Activated CD4-positive, alpha-beta T cell treated with anti-CD3 and anti-CD28 coated beads for 36 hours (primary cell): ENCODE measurements at regions of chrX and their contacts with region 1.

Region 1: DNA sequence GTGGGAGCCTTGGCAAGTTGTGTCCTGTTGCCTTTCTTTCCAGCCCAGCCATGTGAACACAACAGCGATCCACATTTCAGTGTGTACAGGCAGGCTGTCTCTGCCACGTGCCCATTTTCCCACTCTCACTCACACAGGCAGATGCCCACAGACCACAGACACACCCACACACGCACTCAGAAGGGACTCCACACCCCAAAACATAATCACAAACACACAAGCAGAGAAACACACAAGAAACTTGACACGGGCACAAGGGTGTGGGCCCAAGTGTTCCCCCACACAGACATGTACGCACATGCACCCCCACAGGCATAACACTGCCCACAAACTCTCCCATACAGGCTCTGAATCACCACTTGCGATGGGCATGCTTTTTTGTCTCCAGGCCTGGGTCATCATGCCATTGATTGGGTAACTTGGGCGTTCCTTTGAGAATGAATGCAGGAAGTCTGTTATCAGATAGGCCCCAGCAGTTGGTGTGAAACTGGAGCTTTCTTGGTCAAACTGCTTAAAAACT is 84.3 kb downstream of the NBDY start:
- DNase-seq: peak; percentile 67
- ATAC-seq: peak; percentile 73
- H3K4me3 Mint-ChIP-seq: peak overlapping the region; percentile 67
- H3K27ac Mint-ChIP-seq: peak overlapping the region; percentile 99
- H3K4me1 Mint-ChIP-seq: peaks cover 47% of the 10 kb centered on the region
- H3K27me3 Mint-ChIP-seq: no peaks in the 10 kb centered on the region

Region 2: GRCh38 chrX:56503941-56504662 is 309.3 kb before region 1 on chrX:
- CTCF ChIA-PET with region 1: no interaction called
- POLR2A ChIA-PET with region 1: no interaction called
- intact Hi-C with region 1: no loop called
- DNase-seq: no peak
- ATAC-seq: no peak
- H3K4me3 Mint-ChIP-seq: no peak overlapping the region
- H3K27ac Mint-ChIP-seq: no peak overlapping the region
- H3K4me1 Mint-ChIP-seq: no peaks in the 10 kb centered on the region
- H3K27me3 Mint-ChIP-seq: no peaks in the 10 kb centered on the region

Region 3: GRCh38 chrX:56550667-56551066 is 262.7 kb before region 1 on chrX:
- CTCF ChIA-PET with region 1: no interaction called
- POLR2A ChIA-PET with region 1: no interaction called
- intact Hi-C with region 1: no loop called
- DNase-seq: no peak
- ATAC-seq: no peak
- H3K4me3 Mint-ChIP-seq: no peak overlapping the region
- H3K27ac Mint-ChIP-seq: no peak overlapping the region
- H3K4me1 Mint-ChIP-seq: no peaks in the 10 kb centered on the region
- H3K27me3 Mint-ChIP-seq: no peaks in the 10 kb centered on the region

Region 4: DNA sequence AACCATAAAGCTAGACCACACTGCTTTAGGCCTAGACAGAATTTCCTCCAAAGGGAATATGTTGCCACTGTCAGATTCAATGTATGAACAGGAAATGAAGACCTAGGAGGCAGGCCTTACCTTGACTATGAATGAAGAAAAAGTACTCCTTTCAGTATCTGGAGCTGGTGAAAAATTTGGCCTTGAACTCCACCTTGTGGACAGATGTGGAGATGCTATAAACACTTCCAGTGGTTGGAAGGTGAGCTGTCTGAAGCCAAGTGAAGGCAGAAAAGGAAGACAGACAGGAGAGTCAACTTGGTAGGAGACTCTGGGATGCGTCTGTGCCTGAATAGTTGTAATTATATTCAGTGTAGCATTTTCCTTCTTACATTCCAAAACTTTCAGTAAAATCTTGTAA is 164.8 kb after region 1 on chrX:
- CTCF ChIA-PET with region 1: no interaction called
- POLR2A ChIA-PET with region 1: no interaction called
- intact Hi-C with region 1: loop called in 1 of 2 experiments (anchors 5 kb)
- DNase-seq: peak; percentile 44
- ATAC-seq: peak; percentile 92
- H3K4me3 Mint-ChIP-seq: no peak overlapping the region
- H3K27ac Mint-ChIP-seq: no peak overlapping the region
- H3K4me1 Mint-ChIP-seq: no peaks in the 10 kb centered on the region
- H3K27me3 Mint-ChIP-seq: no peaks in the 10 kb centered on the region

Region 5: DNA sequence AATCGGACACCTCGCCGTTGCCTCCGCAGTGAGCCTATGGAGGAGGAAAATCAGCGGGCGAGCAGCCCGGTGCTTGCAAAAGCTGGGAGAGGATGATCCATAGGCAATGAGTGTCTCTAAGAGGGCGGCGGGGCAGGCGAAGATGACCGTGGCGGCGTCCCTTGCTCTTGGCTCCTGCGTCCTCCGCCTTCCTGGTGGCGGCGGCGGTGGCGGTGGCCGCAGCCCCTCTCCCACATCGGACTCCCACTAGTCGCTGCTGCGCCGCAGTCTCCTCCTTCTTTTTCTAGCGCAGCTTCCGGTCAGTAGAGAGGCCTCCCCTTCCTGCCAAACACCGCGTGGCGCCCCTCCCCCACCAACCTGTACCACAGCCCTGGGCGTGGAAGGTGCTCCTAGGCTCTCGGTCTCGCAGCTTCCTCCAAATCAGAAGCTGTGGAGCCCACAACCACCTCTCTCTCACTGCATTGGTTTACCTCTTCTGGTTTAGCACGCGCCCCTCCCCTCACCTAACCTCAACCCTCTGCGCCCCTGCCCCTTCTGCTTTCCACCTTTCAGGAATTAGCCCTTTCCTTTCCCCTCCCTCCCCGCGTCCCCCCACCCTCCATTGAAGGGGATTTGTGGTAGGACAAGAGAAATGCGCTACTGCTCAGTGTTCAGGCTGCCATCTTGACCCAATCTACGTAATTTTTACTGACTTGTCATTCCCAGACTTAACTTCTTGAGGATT is 182.1 kb after region 1 on chrX and contains the start of gene SPIN3:
- CTCF ChIA-PET with region 1: no interaction called
- POLR2A ChIA-PET with region 1: no interaction called
- intact Hi-C with region 1: loop called in 1 of 2 experiments (anchors 5 kb)
- DNase-seq: peak; percentile 80
- ATAC-seq: peak; percentile 95
- H3K4me3 Mint-ChIP-seq: peak within 1 kb of the TSS; percentile 84
- H3K27ac Mint-ChIP-seq: peak within 1 kb of the TSS; percentile 92
- H3K4me1 Mint-ChIP-seq: peaks cover 30% of the 10 kb centered on the region
- H3K27me3 Mint-ChIP-seq: no peaks in the 10 kb centered on the region
- total RNA-seq, gene SPIN3: 7.7 to 10.0 TPM

Region 6: DNA sequence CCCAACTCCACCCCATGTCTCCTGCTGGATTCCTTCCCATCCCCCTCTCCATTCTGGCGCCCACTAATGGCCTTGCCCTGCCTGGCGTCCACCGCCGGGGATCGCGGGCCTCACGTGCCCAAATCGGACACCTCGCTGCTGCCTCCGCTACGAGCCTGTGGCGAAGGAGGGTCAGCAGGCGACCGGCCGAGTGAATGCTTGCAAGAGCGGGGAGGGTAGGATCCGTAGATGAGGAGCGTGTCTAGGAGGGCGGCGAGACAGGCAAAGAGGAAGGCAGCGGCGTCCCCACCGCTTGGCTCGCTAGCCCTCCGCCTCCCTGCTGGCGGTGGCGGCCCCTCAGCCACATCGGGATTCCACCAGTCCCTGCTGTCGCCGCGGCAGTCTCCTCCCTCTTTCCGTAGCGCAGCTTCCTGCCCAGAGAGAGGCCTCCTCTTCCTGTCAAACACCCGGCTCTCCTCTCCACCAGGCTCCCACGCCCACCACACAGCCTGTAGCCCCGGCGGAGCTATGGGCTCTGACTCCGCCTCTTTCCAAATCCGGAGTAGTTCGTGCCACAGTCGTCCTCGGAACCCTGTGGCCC is 307.9 kb after region 1 on chrX and contains the start of gene SPIN2B:
- CTCF ChIA-PET with region 1: no interaction called
- POLR2A ChIA-PET with region 1: no interaction called
- intact Hi-C with region 1: loop called in 1 of 2 experiments (anchors 5 kb)
- DNase-seq: peak; percentile 89
- ATAC-seq: peak; percentile 100
- H3K4me3 Mint-ChIP-seq: peak within 1 kb of the TSS; percentile 85
- H3K27ac Mint-ChIP-seq: peak within 1 kb of the TSS; percentile 90
- H3K4me1 Mint-ChIP-seq: peaks cover 10% of the 10 kb centered on the region
- H3K27me3 Mint-ChIP-seq: no peaks in the 10 kb centered on the region
- total RNA-seq, gene SPIN2B: 6.1 to 7.0 TPM

Region 7: GRCh38 chrX:57918750-57919436 is 1105.5 kb after region 1 on chrX:
- CTCF ChIA-PET with region 1: no interaction called
- POLR2A ChIA-PET with region 1: no interaction called
- intact Hi-C with region 1: loop called in 1 of 2 experiments (anchors 5 kb)
- DNase-seq: peak; percentile 34
- ATAC-seq: peak; percentile 39
- H3K4me3 Mint-ChIP-seq: no peak overlapping the region
- H3K27ac Mint-ChIP-seq: no peak overlapping the region
- H3K4me1 Mint-ChIP-seq: no peaks in the 10 kb centered on the region
- H3K27me3 Mint-ChIP-seq: no peaks in the 10 kb centered on the region